ENCODE measurements at regions of chr15 and their contacts with region 1.

Region 1: GRCh38 chr15:60916679-60917460 is 312.2 kb downstream of the RORA start:
- DNase-seq: peak; percentile 91
- H3K4me3 Mint-ChIP-seq: no peak overlapping the region
- H3K27ac Mint-ChIP-seq: no peak overlapping the region
- H3K4me1 Mint-ChIP-seq: peaks cover 16% of the 10 kb centered on the region
- H3K27me3 Mint-ChIP-seq: peaks cover 5% of the 10 kb centered on the region

Region 2: DNA sequence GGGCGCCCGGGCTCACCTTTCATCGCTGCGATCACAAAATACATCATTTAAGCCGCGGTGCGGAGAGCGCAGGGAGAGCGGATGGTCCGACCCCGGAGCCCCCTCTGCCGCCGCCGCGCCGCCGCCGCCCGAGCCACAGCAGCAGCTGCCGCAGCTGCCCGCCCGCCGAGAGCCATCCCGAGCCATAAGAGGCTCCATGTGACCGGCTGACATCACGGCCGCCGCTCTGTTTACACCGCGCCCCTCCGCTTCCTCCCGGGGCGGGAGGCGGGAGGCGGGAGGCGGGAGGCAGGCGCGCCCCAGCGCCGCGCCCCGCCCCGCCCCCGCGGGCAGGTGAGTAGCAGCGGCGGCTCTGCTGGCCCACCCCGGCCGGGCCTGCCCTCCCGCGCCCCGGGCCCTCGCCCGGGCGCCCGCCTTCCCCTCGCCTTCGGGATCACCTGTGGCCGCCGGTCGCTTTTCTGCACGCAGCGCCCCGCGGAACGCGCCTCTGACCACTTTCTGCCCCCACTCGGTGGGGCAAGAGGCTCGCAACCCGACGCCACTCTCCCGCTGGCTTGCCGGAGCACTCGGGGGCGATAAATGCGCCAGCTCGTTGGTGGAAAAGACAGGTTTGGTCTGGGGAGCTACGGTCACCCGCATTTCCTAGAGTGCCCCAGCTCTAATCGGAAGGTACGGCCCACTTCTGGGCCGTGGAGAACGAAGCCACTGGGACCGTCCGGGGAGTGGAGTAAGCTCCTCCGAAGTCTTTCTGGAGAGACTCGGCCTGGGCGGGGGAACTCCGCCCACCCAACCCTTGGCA is 324.3 kb before region 1 on chr15:
- CTCF ChIA-PET with region 1: interaction called, 83 read pairs
- DNase-seq: peak; percentile 92
- H3K4me3 Mint-ChIP-seq: peak overlapping the region; percentile 78
- H3K27ac Mint-ChIP-seq: peak overlapping the region; percentile 89
- H3K4me1 Mint-ChIP-seq: peaks cover 61% of the 10 kb centered on the region
- H3K27me3 Mint-ChIP-seq: peaks cover 13% of the 10 kb centered on the region

Region 3: DNA sequence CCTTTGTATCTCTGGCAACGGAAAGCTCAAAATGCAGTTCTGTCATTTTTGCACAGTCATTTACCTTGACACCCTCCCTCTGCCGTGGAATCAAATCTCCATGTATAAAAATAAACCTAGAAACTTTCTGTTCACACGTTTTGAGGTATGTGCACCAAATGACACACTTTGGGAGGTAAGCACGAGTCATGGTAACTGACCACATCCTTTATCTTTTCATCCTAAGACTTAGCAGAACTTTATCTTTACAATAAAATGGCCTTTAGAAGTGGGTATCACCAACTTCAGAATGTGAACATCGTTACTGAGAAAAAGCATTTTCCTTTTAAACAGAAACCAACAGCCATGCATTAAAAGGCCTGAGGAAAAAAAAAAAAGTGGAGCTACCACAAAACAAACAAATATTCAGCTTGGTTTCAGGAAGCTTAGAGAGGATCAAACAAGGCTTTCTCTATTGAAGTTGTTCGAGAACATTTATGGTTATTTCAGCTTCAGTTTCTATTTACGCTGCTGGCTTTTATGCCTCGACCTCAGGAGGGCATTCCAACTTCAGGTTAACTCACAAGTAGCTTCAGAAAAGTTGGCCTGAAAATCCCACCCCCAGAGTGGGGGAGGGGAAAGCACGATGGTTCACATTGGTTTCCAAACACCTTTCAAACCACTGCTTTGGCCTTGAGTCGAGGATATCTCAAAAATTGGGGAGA is 266.9 kb before region 1 on chr15:
- CTCF ChIA-PET with region 1: interaction called, 20 read pairs
- DNase-seq: peak; percentile 68
- H3K4me3 Mint-ChIP-seq: peak overlapping the region; percentile 69
- H3K27ac Mint-ChIP-seq: peak overlapping the region; percentile 80
- H3K4me1 Mint-ChIP-seq: peaks cover 49% of the 10 kb centered on the region
- H3K27me3 Mint-ChIP-seq: peaks cover 3% of the 10 kb centered on the region

Region 4: GRCh38 chr15:60905587-60905986 is 11.3 kb before region 1 on chr15:
- CTCF ChIA-PET with region 1: interaction called, 16 read pairs
- DNase-seq: peak; percentile 49
- H3K4me3 Mint-ChIP-seq: no peak overlapping the region
- H3K27ac Mint-ChIP-seq: no peak overlapping the region
- H3K4me1 Mint-ChIP-seq: peaks cover 33% of the 10 kb centered on the region
- H3K27me3 Mint-ChIP-seq: peaks cover 4% of the 10 kb centered on the region

Measured in activated naive CD4-positive, alpha-beta T cell treated with anti-CD3 and anti-CD28 coated beads, Interleukin-2, amount 10 ng/mL, durations not matched to agents 7 days and 5 days (primary cell).